Dorsolateral prefrontal cortex (tissue), 120 donors: ENCODE measurements at regions of chr6 and their contacts with region 1.

Region 1: GRCh38 chr6:115582386-115582785 is 478.3 kb downstream of the FRK start:
- DNase-seq: no peak
- H3K4me3 ChIP-seq: no peak overlapping the region
- H3K27ac ChIP-seq: no peak overlapping the region
- H3K27me3 ChIP-seq: no peaks in the 10 kb centered on the region
- CTCF ChIP-seq: no peak

Region 2: GRCh38 chr6:115514656-115515055 is 67.7 kb before region 1 on chr6:
- intact Hi-C with region 1: loop called in 1 of 2 experiments (anchors 2 kb)
- DNase-seq: no peak
- H3K4me3 ChIP-seq: no peak overlapping the region
- H3K27ac ChIP-seq: no peak overlapping the region
- H3K27me3 ChIP-seq: peaks cover 0 to 8% (median 0%) of the 10 kb centered on the region in 45 donors
- CTCF ChIP-seq: no peak